ENCODE measurements at regions of chr12 and their contacts with region 1.

Region 1: GRCh38 chr12:53005986-53006809 is at the start of gene EIF4B:
- DNase-seq: peak; percentile 99 to 100 (median 99)
- ATAC-seq: peak; percentile 89
- H3K4me3 ChIP-seq: peak within 1 kb of the TSS; percentile 93 to 99
- H3K4me3 Mint-ChIP-seq: peak within 1 kb of the TSS; percentile 100
- H3K27ac ChIP-seq: peak within 1 kb of the TSS; percentile 80 to 97
- H3K27ac Mint-ChIP-seq: peak within 1 kb of the TSS; percentile 98
- H3K4me1 ChIP-seq: peaks cover 44% of the 10 kb centered on the region
- H3K4me1 Mint-ChIP-seq: peaks cover 48% of the 10 kb centered on the region
- H3K27me3 ChIP-seq: peaks cover 0 to 2% of the 10 kb centered on the region in 2 experiments
- H3K27me3 Mint-ChIP-seq: peaks cover 3% of the 10 kb centered on the region
- CTCF ChIP-seq: no peak
- total RNA-seq, gene EIF4B: 709 to 741 TPM

Region 2: DNA sequence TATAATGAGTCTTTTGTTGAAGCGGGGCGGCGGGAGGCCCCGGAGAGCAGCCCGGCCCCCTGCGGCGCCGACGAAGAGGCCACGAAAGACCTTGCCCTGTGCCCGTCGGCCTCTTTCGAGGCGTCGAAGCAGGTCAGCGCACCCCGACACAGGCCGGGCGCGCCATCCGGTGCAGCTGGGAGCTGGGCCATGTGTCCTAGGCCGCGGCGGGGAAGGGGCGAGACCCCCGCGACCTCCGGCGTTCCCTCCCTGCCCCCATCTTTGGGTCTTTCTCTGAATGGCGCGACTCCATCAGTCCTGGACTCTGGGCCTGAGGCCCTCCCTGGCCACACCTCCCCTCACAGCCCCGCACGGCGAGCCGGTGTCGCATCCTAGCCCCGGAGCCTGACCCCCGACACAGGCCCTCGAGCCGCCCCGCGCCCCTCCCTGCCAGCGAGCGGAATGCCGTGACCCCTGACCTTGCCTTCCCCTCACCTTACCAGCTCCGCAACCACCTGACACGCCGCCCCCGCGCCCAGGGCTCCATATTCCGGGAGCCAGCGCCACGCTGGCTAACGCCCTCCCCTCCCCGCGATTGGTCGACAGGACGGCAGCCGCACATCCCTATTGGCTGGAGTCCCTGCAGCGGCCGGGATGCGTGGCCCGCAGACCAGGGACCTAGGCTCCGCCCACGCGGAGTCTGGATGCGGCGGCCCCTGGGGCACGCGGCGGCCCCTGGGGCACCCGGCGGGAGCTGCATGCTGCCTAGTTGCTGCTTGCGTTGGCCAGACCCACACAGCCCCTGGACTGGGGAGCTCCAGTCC is 1980.2 kb before region 1 on chr12 and contains the start of gene SLC11A2:
- CTCF ChIA-PET with region 1: no interaction called
- POLR2A ChIA-PET with region 1: no interaction called
- intact Hi-C with region 1: loop called in 1 of 2 experiments (anchors 5 kb)
- DNase-seq: peak; percentile 75 to 96 (median 90)
- ATAC-seq: peak; percentile 90
- H3K4me3 ChIP-seq: peak within 1 kb of the TSS; percentile 76 to 83
- H3K4me3 Mint-ChIP-seq: peak within 1 kb of the TSS; percentile 98
- H3K27ac ChIP-seq: peak within 1 kb of the TSS; percentile 72 to 80
- H3K27ac Mint-ChIP-seq: peak within 1 kb of the TSS; percentile 99
- H3K4me1 ChIP-seq: peaks cover 41% of the 10 kb centered on the region
- H3K4me1 Mint-ChIP-seq: peaks cover 56% of the 10 kb centered on the region
- H3K27me3 ChIP-seq: no peaks in the 10 kb centered on the region
- H3K27me3 Mint-ChIP-seq: no peaks in the 10 kb centered on the region
- CTCF ChIP-seq: no peak
- total RNA-seq, gene SLC11A2: 35.1 to 43.1 TPM

Region 3: DNA sequence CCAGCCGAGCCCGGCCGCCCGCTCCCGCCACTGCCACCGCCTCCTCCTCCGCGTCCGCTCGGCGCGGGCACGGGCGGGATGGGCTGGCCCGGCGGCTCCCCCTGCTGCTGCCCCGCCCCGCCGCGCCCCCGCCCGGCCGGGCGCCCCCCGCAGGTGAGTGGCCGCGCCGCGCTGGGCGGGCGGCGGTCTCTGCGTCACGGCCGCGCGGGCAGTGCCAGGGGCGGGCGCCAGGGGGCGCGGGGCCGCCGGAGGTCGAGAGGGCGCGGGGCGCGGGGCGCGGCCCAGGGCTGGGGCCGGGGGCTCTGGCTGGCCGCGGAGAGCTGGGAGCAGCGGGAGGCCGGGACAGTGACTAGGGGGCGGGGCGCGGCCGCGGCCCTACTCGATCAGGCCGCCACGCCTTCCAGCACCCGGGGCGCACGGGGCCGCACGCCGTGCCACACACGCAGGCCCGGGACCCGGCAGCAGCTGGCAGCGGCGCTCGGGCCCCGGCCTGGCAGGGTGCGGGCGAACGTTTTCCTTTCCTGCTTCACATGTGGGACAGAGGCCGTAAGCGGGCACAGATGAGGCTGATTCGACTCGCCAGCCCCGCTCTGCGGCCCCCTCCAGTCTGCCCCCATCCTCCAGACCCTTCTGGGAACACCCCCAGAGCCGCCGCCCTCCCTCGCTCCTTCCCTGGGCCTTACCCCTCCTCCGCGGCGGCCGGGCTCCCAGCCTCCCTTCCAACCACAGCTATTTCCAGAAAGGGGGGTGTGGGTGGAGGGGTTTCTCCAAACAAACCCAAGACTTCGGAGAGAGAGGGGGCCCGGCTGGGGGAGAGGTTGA is 41.2 kb after region 1 on chr12:
- CTCF ChIA-PET with region 1: interaction called, 5 read pairs
- POLR2A ChIA-PET with region 1: interaction called, 5 read pairs
- intact Hi-C with region 1: loop called in 1 of 2 experiments (anchors 1 kb)
- DNase-seq: peak; percentile 45 to 85 (median 65)
- ATAC-seq: peak; percentile 85
- H3K4me3 ChIP-seq: peak overlapping the region; percentile 8 to 85
- H3K4me3 Mint-ChIP-seq: peak overlapping the region; percentile 69
- H3K27ac ChIP-seq: peak overlapping the region in 1 of 2 experiments; percentile 70
- H3K27ac Mint-ChIP-seq: peak overlapping the region; percentile 55
- H3K4me1 ChIP-seq: peaks cover 5% of the 10 kb centered on the region
- H3K4me1 Mint-ChIP-seq: peaks cover 11% of the 10 kb centered on the region
- H3K27me3 ChIP-seq: no peaks in the 10 kb centered on the region
- H3K27me3 Mint-ChIP-seq: no peaks in the 10 kb centered on the region
- CTCF ChIP-seq: no peak

Region 4: GRCh38 chr12:53295070-53295890 is 289.1 kb after region 1 on chr12 and contains the start of gene PFDN5:
- CTCF ChIA-PET with region 1: no interaction called
- POLR2A ChIA-PET with region 1: no interaction called
- intact Hi-C with region 1: loop called in 1 of 2 experiments (anchors 1 kb)
- DNase-seq: peak; percentile 72 to 95 (median 87)
- ATAC-seq: peak; percentile 92
- H3K4me3 ChIP-seq: peak within 1 kb of the TSS; percentile 75 to 88
- H3K4me3 Mint-ChIP-seq: peak within 1 kb of the TSS; percentile 99
- H3K27ac ChIP-seq: peak within 1 kb of the TSS; percentile 80 to 82
- H3K27ac Mint-ChIP-seq: peak within 1 kb of the TSS; percentile 99
- H3K4me1 ChIP-seq: peaks cover 28% of the 10 kb centered on the region
- H3K4me1 Mint-ChIP-seq: peaks cover 51% of the 10 kb centered on the region
- H3K27me3 ChIP-seq: no peaks in the 10 kb centered on the region
- H3K27me3 Mint-ChIP-seq: no peaks in the 10 kb centered on the region
- CTCF ChIP-seq: no peak
- total RNA-seq, gene PFDN5: 741 to 751 TPM

Region 5: DNA sequence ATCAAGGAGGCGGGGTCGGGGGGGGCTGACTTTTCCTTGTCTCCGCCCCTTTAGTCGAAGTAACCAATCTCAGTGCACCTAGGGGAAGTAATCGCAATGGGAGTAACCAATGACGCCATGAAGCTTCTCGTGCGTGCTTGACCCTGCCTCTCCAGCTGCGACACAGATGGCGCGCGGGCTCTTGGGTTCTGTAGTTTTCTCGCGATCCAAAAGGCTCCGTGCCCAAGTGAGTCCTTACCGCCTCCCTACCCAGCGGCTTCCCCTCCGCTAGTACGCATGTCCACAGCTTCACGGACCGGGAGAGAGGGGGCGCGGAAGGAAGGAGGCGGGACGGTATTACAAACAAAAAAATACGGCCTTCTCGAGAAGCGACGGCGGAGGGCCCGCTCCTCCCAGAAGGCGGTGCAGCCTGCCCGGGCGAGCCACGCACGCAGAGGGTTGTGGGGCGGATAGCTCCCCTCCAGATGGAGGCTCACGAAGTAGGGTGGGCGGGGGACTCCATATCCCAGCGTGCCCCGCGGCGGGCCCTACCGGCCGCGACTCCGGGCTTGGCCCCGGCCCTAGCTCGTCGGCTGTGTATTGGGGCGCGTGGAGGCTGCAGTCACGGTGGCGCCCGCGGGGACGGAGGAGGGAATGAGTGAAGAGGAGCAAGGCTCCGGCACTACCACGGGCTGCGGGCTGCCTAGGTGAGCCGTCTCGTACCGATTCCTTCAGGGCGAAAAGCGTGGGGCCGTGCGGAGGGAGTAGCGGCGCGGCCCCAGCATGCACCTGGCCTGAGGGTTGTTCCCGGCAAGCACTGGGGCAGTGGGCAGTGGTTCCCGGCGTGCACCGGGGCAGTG is 494.8 kb after region 1 on chr12 and contains the start of gene TARBP2:
- CTCF ChIA-PET with region 1: no interaction called
- POLR2A ChIA-PET with region 1: interaction called, 8 read pairs
- intact Hi-C with region 1: loop called (anchors 2 kb)
- DNase-seq: peak; percentile 92 to 99 (median 98)
- ATAC-seq: peak; percentile 77
- H3K4me3 ChIP-seq: peak within 1 kb of the TSS; percentile 64 to 87
- H3K4me3 Mint-ChIP-seq: peak within 1 kb of the TSS; percentile 93
- H3K27ac ChIP-seq: peak within 1 kb of the TSS; percentile 90 to 95
- H3K27ac Mint-ChIP-seq: peak within 1 kb of the TSS; percentile 97
- H3K4me1 ChIP-seq: peaks cover 28% of the 10 kb centered on the region
- H3K4me1 Mint-ChIP-seq: peaks cover 48% of the 10 kb centered on the region
- H3K27me3 ChIP-seq: no peaks in the 10 kb centered on the region
- H3K27me3 Mint-ChIP-seq: no peaks in the 10 kb centered on the region
- CTCF ChIP-seq: no peak
- total RNA-seq, gene TARBP2: 22.9 to 23.9 TPM

Region 6: DNA sequence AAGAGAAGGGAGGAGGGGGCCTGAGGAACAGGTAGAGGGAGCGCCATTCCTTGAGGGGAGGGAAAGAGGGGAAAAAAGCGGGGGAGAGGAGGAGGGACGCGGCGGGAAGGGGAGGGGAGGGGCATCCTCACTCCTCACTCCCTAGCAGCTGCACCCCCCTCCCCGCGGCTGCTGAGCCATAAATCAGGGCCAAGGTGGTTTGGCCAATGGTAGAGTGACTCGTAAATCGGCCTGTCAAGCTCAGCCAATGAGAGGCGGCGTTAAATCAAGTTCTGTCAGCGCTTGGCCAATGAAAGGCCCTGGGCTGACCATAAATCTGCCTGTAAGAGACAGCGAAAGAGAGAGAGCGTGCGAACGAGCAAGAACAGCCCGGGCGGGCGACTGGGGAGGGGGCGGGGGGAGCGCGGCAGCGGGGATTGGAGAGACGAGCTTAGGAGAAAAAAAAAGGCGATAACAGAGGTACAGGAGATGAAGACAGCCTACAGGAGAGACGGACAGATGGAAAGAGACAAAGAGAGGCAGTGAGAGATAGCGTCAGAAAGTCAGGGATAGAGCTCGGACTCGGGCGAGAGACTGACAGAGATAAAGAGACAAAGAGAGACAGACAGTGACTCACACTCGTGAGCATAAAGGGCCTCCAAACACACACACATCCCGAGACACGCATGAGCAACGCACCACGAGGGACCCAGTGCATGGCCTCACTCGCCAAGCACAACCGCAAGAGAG is 1353.0 kb after region 1 on chr12:
- CTCF ChIA-PET with region 1: no interaction called
- POLR2A ChIA-PET with region 1: no interaction called
- intact Hi-C with region 1: loop called in 1 of 2 experiments (anchors 5 kb)
- DNase-seq: peak; percentile 83 to 99 (median 91)
- ATAC-seq: peak; percentile 91
- H3K4me3 ChIP-seq: peak overlapping the region; percentile 77 to 97
- H3K4me3 Mint-ChIP-seq: no peak overlapping the region
- H3K27ac ChIP-seq: peak overlapping the region; percentile 60 to 84
- H3K27ac Mint-ChIP-seq: no peak overlapping the region
- H3K4me1 ChIP-seq: peaks cover 23% of the 10 kb centered on the region
- H3K4me1 Mint-ChIP-seq: peaks cover 16% of the 10 kb centered on the region
- H3K27me3 ChIP-seq: no peaks in the 10 kb centered on the region
- H3K27me3 Mint-ChIP-seq: no peaks in the 10 kb centered on the region
- CTCF ChIP-seq: no peak

Measured in CD8-positive, alpha-beta T cell (primary cell).